ENCODE measurements at regions of chr10 and their contacts with region 1.

Region 1: GRCh38 chr10:95445837-95446486 is 115.2 kb downstream of the SORBS1 start:
- DNase-seq: peak; percentile 62
- ATAC-seq: peak; percentile 62
- H3K4me3 ChIP-seq: no peak overlapping the region
- H3K4me3 Mint-ChIP-seq: no peak overlapping the region
- H3K27ac ChIP-seq: no peak overlapping the region
- H3K27ac Mint-ChIP-seq: no peak overlapping the region
- H3K4me1 ChIP-seq: no peaks in the 10 kb centered on the region
- H3K4me1 Mint-ChIP-seq: no peaks in the 10 kb centered on the region
- H3K27me3 ChIP-seq: peaks cover 0 to 10% (median 1%) of the 10 kb centered on the region in 4 experiments
- H3K27me3 Mint-ChIP-seq: peaks cover 21% of the 10 kb centered on the region
- CTCF ChIP-seq: peak; percentile 86

Region 2: DNA sequence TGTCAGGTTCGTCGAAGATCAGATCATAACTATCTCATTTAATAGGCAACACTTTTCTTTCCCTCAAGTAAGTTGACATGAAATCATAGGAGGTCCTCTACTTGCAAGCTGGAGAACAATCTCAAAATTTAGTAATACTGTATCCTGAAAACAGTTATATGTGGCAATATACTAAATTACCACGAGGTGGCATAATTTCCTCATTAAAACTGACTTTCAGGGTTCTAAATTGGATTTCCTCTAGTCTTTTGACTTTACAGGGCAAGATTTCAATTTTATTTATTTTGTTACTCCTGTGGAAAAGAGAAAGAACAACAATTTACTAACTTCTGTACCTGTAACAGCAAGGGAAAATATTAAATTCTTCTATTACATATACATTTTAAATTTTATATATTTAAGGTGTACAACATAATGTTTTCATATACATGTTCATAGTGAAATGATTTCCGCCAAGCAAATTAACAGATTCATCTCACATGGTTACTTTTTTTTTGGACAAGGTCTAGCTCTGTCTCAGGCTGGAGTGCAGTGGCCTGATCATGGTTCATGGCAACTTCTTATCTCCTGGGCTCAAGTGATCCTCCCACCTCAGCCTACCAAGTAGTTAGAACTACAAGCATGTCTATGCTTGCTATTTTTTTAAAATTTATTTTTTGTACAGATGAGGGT is 815.8 kb before region 1 on chr10:
- CTCF ChIA-PET with region 1: no interaction called
- POLR2A ChIA-PET with region 1: no interaction called
- intact Hi-C with region 1: loop called (anchors 10 kb)
- DNase-seq: peak; percentile 8
- ATAC-seq: no peak
- H3K4me3 ChIP-seq: no peak overlapping the region
- H3K4me3 Mint-ChIP-seq: no peak overlapping the region
- H3K27ac ChIP-seq: no peak overlapping the region
- H3K27ac Mint-ChIP-seq: no peak overlapping the region
- H3K4me1 ChIP-seq: no peaks in the 10 kb centered on the region
- H3K4me1 Mint-ChIP-seq: peaks cover 4% of the 10 kb centered on the region
- H3K27me3 ChIP-seq: no peaks in the 10 kb centered on the region
- H3K27me3 Mint-ChIP-seq: peaks cover 4% of the 10 kb centered on the region
- CTCF ChIP-seq: peak; percentile 85

Region 3: GRCh38 chr10:95133016-95133752 is 312.8 kb before region 1 on chr10:
- CTCF ChIA-PET with region 1: interaction called, 7 read pairs
- POLR2A ChIA-PET with region 1: no interaction called
- intact Hi-C with region 1: loop called (anchors 1 kb)
- DNase-seq: peak; percentile 78
- ATAC-seq: peak; percentile 47
- H3K4me3 ChIP-seq: no peak overlapping the region
- H3K4me3 Mint-ChIP-seq: no peak overlapping the region
- H3K27ac ChIP-seq: no peak overlapping the region
- H3K27ac Mint-ChIP-seq: no peak overlapping the region
- H3K4me1 ChIP-seq: no peaks in the 10 kb centered on the region
- H3K4me1 Mint-ChIP-seq: no peaks in the 10 kb centered on the region
- H3K27me3 ChIP-seq: no peaks in the 10 kb centered on the region
- H3K27me3 Mint-ChIP-seq: no peaks in the 10 kb centered on the region
- CTCF ChIP-seq: peak; percentile 90

Measured in B cell (primary cell).